CD4-positive, alpha-beta memory T cell (primary cell): ENCODE measurements at regions of chr3 and their contacts with region 1.

Region 1: DNA sequence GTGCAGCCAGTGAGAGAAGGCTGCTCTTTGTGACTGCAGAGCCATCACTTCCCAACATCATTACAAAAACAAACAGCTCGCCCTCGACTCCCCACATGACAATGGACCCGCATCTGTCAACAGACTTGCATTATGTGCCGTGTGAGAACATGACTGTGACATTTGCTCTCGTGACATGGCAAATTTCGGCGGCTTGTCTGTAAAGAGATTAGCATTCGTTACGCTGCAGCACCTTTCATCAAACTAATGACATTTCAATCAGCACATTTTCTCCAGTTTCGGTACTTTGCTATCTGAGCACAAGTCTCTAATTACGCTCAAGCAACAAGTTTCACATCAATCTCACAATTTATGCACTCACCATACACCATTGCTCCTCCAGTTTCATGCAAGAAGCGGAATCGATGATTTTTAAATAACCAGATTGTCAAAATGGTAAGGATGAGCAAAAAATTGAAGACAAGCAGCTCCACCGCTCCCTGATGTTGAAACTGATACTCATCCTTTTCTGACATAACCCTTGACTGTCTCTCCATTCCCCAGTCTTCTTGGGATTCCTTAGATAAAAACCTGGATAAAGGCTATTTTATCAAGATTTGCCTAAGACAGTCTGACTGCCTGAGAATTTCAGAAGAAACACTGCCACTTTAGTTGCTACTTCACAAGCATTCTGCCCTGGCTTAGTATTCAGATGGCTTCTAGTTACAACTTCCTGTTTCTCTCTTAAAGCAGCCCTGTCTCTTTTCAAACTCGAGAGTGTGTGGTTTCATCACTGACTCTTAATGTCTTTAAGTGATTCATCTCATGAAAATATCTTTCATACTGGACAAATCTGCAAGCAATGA is at the start of gene SLC9A9:
- DNase-seq: peak; percentile 40 to 51 (median 46)
- H3K4me3 ChIP-seq: peak within 1 kb of the TSS; percentile 85 to 98
- H3K4me3 Mint-ChIP-seq: peak within 1 kb of the TSS; percentile 95 to 99 (median 98)
- H3K27ac ChIP-seq: peak within 1 kb of the TSS; percentile 58
- H3K27ac Mint-ChIP-seq: peak within 1 kb of the TSS; percentile 79 to 97 (median 91)
- H3K4me1 ChIP-seq: peaks cover 64% of the 10 kb centered on the region
- H3K4me1 Mint-ChIP-seq: peaks cover 45 to 71% (median 55%) of the 10 kb centered on the region in 4 donors
- H3K27me3 ChIP-seq: no peaks in the 10 kb centered on the region
- H3K27me3 Mint-ChIP-seq: no peaks in the 10 kb centered on the region
- total RNA-seq, gene SLC9A9: 30.8 to 34.8 TPM

Region 2: GRCh38 chr3:143825513-143825912 is 22.5 kb before region 1 on chr3:
- CTCF ChIA-PET with region 1: interaction called, 3 read pairs
- POLR2A ChIA-PET with region 1: interaction called, 15 read pairs
- intact Hi-C with region 1: loop called (anchors 1 kb)
- DNase-seq: peak; percentile 35 to 61 (median 46)
- H3K4me3 ChIP-seq: no peak overlapping the region
- H3K4me3 Mint-ChIP-seq: peak overlapping the region in 7 of 8 donors; percentile 26 to 75 (median 56)
- H3K27ac ChIP-seq: no peak overlapping the region
- H3K27ac Mint-ChIP-seq: peak overlapping the region; percentile 70 to 93 (median 84)
- H3K4me1 ChIP-seq: peaks cover 38% of the 10 kb centered on the region
- H3K4me1 Mint-ChIP-seq: peaks cover 39 to 59% (median 45%) of the 10 kb centered on the region in 4 donors
- H3K27me3 ChIP-seq: no peaks in the 10 kb centered on the region
- H3K27me3 Mint-ChIP-seq: no peaks in the 10 kb centered on the region